ENCODE measurements at regions of chr5 and their contacts with region 1.

Region 1: GRCh38 chr5:72847989-72848473 is 31.6 kb downstream of the TNPO1 start:
- DNase-seq: peak; percentile 92
- ATAC-seq: peak; percentile 84
- H3K4me3 Mint-ChIP-seq: peak overlapping the region; percentile 99
- H3K27ac Mint-ChIP-seq: peak overlapping the region; percentile 99
- H3K4me1 Mint-ChIP-seq: peaks cover 47% of the 10 kb centered on the region
- H3K27me3 Mint-ChIP-seq: no peaks in the 10 kb centered on the region
- CTCF ChIP-seq: no peak

Region 2: DNA sequence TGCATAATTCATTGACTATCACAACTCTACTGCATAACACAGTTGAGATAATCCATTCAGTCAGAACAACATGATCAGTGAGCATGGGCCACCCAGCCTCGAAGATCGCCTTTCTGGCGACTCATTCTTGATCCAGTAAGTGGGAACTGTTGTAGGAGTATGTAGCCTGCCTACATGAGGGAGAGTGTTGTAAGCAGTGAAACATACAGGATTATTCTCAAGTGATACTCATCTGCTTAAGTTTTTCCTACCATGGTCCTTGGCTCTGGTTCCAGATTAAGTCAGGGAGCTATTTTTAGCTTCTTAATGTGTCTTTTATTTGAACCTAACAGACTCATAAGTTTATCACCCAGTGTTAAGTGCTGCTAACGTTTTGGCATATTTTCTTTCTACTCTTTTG is 12.5 kb after region 1 on chr5:
- CTCF ChIA-PET with region 1: interaction called, 6 read pairs
- POLR2A ChIA-PET with region 1: interaction called, 11 read pairs
- intact Hi-C with region 1: no loop called
- DNase-seq: no peak
- ATAC-seq: no peak
- H3K4me3 Mint-ChIP-seq: no peak overlapping the region
- H3K27ac Mint-ChIP-seq: no peak overlapping the region
- H3K4me1 Mint-ChIP-seq: peaks cover 37% of the 10 kb centered on the region
- H3K27me3 Mint-ChIP-seq: no peaks in the 10 kb centered on the region
- CTCF ChIP-seq: no peak

Region 3: GRCh38 chr5:72871366-72872024 is 23.5 kb after region 1 on chr5:
- CTCF ChIA-PET with region 1: interaction called, 3 read pairs
- POLR2A ChIA-PET with region 1: interaction called, 11 read pairs
- intact Hi-C with region 1: no loop called
- DNase-seq: no peak
- ATAC-seq: peak; percentile 62
- H3K4me3 Mint-ChIP-seq: no peak overlapping the region
- H3K27ac Mint-ChIP-seq: peak overlapping the region; percentile 72
- H3K4me1 Mint-ChIP-seq: peaks cover 13% of the 10 kb centered on the region
- H3K27me3 Mint-ChIP-seq: no peaks in the 10 kb centered on the region
- CTCF ChIP-seq: no peak

Measured in activated CD8-positive, alpha-beta T cell treated with anti-CD3 and anti-CD28 coated beads for 36 hours (primary cell).